ENCODE measurements at regions of chr13 and their contacts with region 1.

Region 1: GRCh38 chr13:21638319-21639282 is 32.3 kb upstream of the FGF9 start:
- DNase-seq: peak in 5 of 9 donors; percentile 21 to 47 (median 38)
- ATAC-seq: peak; percentile 51
- H3K4me3 ChIP-seq: no peak overlapping the region
- H3K4me3 Mint-ChIP-seq: no peak overlapping the region
- H3K27ac ChIP-seq: no peak overlapping the region
- H3K27ac Mint-ChIP-seq: no peak overlapping the region
- H3K4me1 ChIP-seq: no peaks in the 10 kb centered on the region
- H3K4me1 Mint-ChIP-seq: peaks cover 0 to 5% (median 0%) of the 10 kb centered on the region in 7 donors
- H3K27me3 ChIP-seq: no peaks in the 10 kb centered on the region
- H3K27me3 Mint-ChIP-seq: peaks cover 0 to 7% (median 3%) of the 10 kb centered on the region in 5 donors

Region 2: GRCh38 chr13:21326155-21327031 is 312.2 kb before region 1 on chr13:
- CTCF ChIA-PET with region 1: no interaction called
- POLR2A ChIA-PET with region 1: no interaction called
- intact Hi-C with region 1: no loop called
- DNase-seq: peak in 4 of 9 donors; percentile 14 to 27 (median 23)
- ATAC-seq: peak; percentile 51
- H3K4me3 ChIP-seq: peak overlapping the region; percentile 52
- H3K4me3 Mint-ChIP-seq: peak overlapping the region in 7 of 10 donors; percentile 64 to 75 (median 74)
- H3K27ac ChIP-seq: peak overlapping the region; percentile 41
- H3K27ac Mint-ChIP-seq: peak overlapping the region in 4 of 9 donors; percentile 50 to 71 (median 69)
- H3K4me1 ChIP-seq: no peaks in the 10 kb centered on the region
- H3K4me1 Mint-ChIP-seq: peaks cover 0 to 29% (median 5%) of the 10 kb centered on the region in 7 donors
- H3K27me3 ChIP-seq: no peaks in the 10 kb centered on the region
- H3K27me3 Mint-ChIP-seq: no peaks in the 10 kb centered on the region

Region 3: GRCh38 chr13:21670883-21671619 is 32.5 kb after region 1 on chr13 and contains the start of gene FGF9:
- CTCF ChIA-PET with region 1: interaction called, 6 read pairs
- POLR2A ChIA-PET with region 1: interaction called, 7 read pairs
- intact Hi-C with region 1: loop called (anchors 1 to 2 kb)
- DNase-seq: peak; percentile 76 to 88 (median 86)
- ATAC-seq: peak; percentile 89
- H3K4me3 ChIP-seq: peak within 1 kb of the TSS; percentile 92
- H3K4me3 Mint-ChIP-seq: peak within 1 kb of the TSS; percentile 88 to 98 (median 93)
- H3K27ac ChIP-seq: peak within 1 kb of the TSS; percentile 48
- H3K27ac Mint-ChIP-seq: peak within 1 kb of the TSS; percentile 61 to 94 (median 78)
- H3K4me1 ChIP-seq: peaks cover 19 to 32% of the 10 kb centered on the region in 2 donors
- H3K4me1 Mint-ChIP-seq: peaks cover 27 to 45% (median 44%) of the 10 kb centered on the region in 7 donors
- H3K27me3 ChIP-seq: peaks cover 0 to 4% of the 10 kb centered on the region in 2 donors
- H3K27me3 Mint-ChIP-seq: peaks cover 5 to 77% (median 20%) of the 10 kb centered on the region in 5 donors
- total RNA-seq, gene FGF9: 0.19 to 5.6 (median 2.0) TPM

Region 4: GRCh38 chr13:21825186-21825585 is 186.6 kb after region 1 on chr13:
- CTCF ChIA-PET with region 1: no interaction called
- POLR2A ChIA-PET with region 1: no interaction called
- intact Hi-C with region 1: no loop called
- DNase-seq: no peak
- ATAC-seq: no peak
- H3K4me3 ChIP-seq: no peak overlapping the region
- H3K4me3 Mint-ChIP-seq: no peak overlapping the region
- H3K27ac ChIP-seq: no peak overlapping the region
- H3K27ac Mint-ChIP-seq: no peak overlapping the region
- H3K4me1 ChIP-seq: no peaks in the 10 kb centered on the region
- H3K4me1 Mint-ChIP-seq: no peaks in the 10 kb centered on the region
- H3K27me3 ChIP-seq: no peaks in the 10 kb centered on the region
- H3K27me3 Mint-ChIP-seq: peaks cover 0 to 6% (median 0%) of the 10 kb centered on the region in 5 donors

Region 5: GRCh38 chr13:21849323-21849722 is 210.7 kb after region 1 on chr13:
- CTCF ChIA-PET with region 1: no interaction called
- POLR2A ChIA-PET with region 1: no interaction called
- intact Hi-C with region 1: loop called in 1 of 2 experiments (anchors 10 kb)
- DNase-seq: peak in 6 of 9 donors; percentile 2 to 37 (median 21)
- ATAC-seq: peak; percentile 70
- H3K4me3 ChIP-seq: no peak overlapping the region
- H3K4me3 Mint-ChIP-seq: no peak overlapping the region
- H3K27ac ChIP-seq: no peak overlapping the region
- H3K27ac Mint-ChIP-seq: no peak overlapping the region
- H3K4me1 ChIP-seq: no peaks in the 10 kb centered on the region
- H3K4me1 Mint-ChIP-seq: peaks cover 0 to 6% (median 2%) of the 10 kb centered on the region in 7 donors
- H3K27me3 ChIP-seq: no peaks in the 10 kb centered on the region
- H3K27me3 Mint-ChIP-seq: no peaks in the 10 kb centered on the region

Region 6: DNA sequence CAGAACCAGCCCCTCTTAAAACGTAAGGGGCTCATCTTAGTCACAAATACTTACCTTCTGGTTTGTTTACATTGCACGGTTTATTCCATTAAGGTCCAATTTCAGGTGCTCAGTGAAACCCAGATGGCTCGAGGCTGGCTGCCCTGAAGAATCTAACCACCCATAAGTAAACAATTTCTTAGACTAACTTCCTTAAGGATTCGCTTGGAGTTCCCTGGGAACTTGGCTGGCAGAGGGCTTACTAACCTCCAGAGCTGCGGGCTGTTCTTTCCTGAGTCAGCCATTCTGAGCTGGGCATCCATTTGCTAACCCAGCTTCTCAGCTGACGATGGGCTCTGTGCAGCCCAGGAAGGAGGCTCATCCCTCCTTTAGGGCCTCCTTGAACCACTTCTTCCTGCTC is 294.4 kb after region 1 on chr13:
- CTCF ChIA-PET with region 1: no interaction called
- POLR2A ChIA-PET with region 1: no interaction called
- intact Hi-C with region 1: no loop called
- DNase-seq: no peak
- ATAC-seq: no peak
- H3K4me3 ChIP-seq: no peak overlapping the region
- H3K4me3 Mint-ChIP-seq: no peak overlapping the region
- H3K27ac ChIP-seq: no peak overlapping the region
- H3K27ac Mint-ChIP-seq: no peak overlapping the region
- H3K4me1 ChIP-seq: no peaks in the 10 kb centered on the region
- H3K4me1 Mint-ChIP-seq: peaks cover 0 to 4% (median 0%) of the 10 kb centered on the region in 7 donors
- H3K27me3 ChIP-seq: no peaks in the 10 kb centered on the region
- H3K27me3 Mint-ChIP-seq: no peaks in the 10 kb centered on the region

Region 7: DNA sequence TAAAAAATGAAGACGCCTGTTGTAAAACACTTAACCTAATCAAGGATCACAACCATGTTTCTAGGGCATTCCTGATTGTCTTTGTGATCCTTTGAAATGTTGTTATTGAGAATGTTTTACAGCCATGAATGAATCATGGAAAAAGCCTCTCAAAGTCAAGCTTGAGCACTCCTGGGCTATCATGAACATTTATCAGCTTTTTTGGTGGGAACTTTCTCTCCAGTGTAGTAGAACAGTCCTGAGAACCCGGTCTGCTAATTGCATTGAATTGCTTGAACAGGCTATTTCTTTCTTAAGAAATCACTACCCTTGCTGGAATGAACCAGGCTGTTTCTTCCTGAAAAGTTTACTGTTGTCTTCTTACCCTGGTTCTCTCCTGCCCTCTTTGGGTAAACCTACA is 548.7 kb after region 1 on chr13:
- CTCF ChIA-PET with region 1: no interaction called
- POLR2A ChIA-PET with region 1: no interaction called
- intact Hi-C with region 1: loop called in 1 of 2 experiments (anchors 1 kb)
- DNase-seq: peak in 2 of 9 donors; percentile 7 to 10
- ATAC-seq: no peak
- H3K4me3 ChIP-seq: no peak overlapping the region
- H3K4me3 Mint-ChIP-seq: no peak overlapping the region
- H3K27ac ChIP-seq: no peak overlapping the region
- H3K27ac Mint-ChIP-seq: no peak overlapping the region
- H3K4me1 ChIP-seq: no peaks in the 10 kb centered on the region
- H3K4me1 Mint-ChIP-seq: peaks cover 0 to 17% (median 0%) of the 10 kb centered on the region in 7 donors
- H3K27me3 ChIP-seq: no peaks in the 10 kb centered on the region
- H3K27me3 Mint-ChIP-seq: peaks cover 0 to 2% (median 0%) of the 10 kb centered on the region in 5 donors

Region 8: GRCh38 chr13:22298530-22298929 is 659.9 kb after region 1 on chr13:
- CTCF ChIA-PET with region 1: no interaction called
- POLR2A ChIA-PET with region 1: no interaction called
- intact Hi-C with region 1: loop called in 1 of 2 experiments (anchors 5 kb)
- DNase-seq: no peak
- ATAC-seq: no peak
- H3K4me3 ChIP-seq: no peak overlapping the region
- H3K4me3 Mint-ChIP-seq: no peak overlapping the region
- H3K27ac ChIP-seq: no peak overlapping the region
- H3K27ac Mint-ChIP-seq: no peak overlapping the region
- H3K4me1 ChIP-seq: no peaks in the 10 kb centered on the region
- H3K4me1 Mint-ChIP-seq: peaks cover 0 to 9% (median 0%) of the 10 kb centered on the region in 7 donors
- H3K27me3 ChIP-seq: no peaks in the 10 kb centered on the region
- H3K27me3 Mint-ChIP-seq: peaks cover 0 to 15% (median 0%) of the 10 kb centered on the region in 5 donors

Region 9: GRCh38 chr13:22801402-22802003 is 1162.9 kb after region 1 on chr13:
- CTCF ChIA-PET with region 1: interaction called, 4 read pairs
- POLR2A ChIA-PET with region 1: no interaction called
- intact Hi-C with region 1: loop called in 1 of 2 experiments (anchors 2 kb)
- DNase-seq: no peak
- ATAC-seq: no peak
- H3K4me3 ChIP-seq: no peak overlapping the region
- H3K4me3 Mint-ChIP-seq: no peak overlapping the region
- H3K27ac ChIP-seq: no peak overlapping the region
- H3K27ac Mint-ChIP-seq: no peak overlapping the region
- H3K4me1 ChIP-seq: no peaks in the 10 kb centered on the region
- H3K4me1 Mint-ChIP-seq: no peaks in the 10 kb centered on the region
- H3K27me3 ChIP-seq: no peaks in the 10 kb centered on the region
- H3K27me3 Mint-ChIP-seq: peaks cover 2 to 29% (median 18%) of the 10 kb centered on the region in 5 donors

Measured in naive thymus-derived CD4-positive, alpha-beta T cell (primary cell).